H1 (cell line): ENCODE measurements at regions of chr12 and their contacts with region 1.

Region 1: GRCh38 chr12:53200458-53201176 is 6.4 kb downstream of the ITGB7 start:
- DNase-seq: no peak
- H3K4me3 ChIP-seq: no peak overlapping the region
- H3K27ac ChIP-seq: no peak overlapping the region
- H3K4me1 ChIP-seq: no peaks in the 10 kb centered on the region; a peak in 1 of 7 replicates
- H3K27me3 ChIP-seq: peaks cover under 1 to 27% (median 16%) of the 10 kb centered on the region in 4 experiments
- CTCF ChIP-seq: no peak
- EP300 ChIP-seq: no peak
- POLR2A ChIP-seq: no peak
- RAD21 ChIP-seq: no peak

Region 2: GRCh38 chr12:53129170-53129569 is 71.4 kb before region 1 on chr12:
- CTCF ChIA-PET with region 1: interaction called, 10 read pairs
- POLR2A ChIA-PET with region 1: no interaction called
- DNase-seq: no peak
- H3K4me3 ChIP-seq: no peak overlapping the region
- H3K27ac ChIP-seq: no peak overlapping the region
- H3K4me1 ChIP-seq: no peaks in the 10 kb centered on the region
- H3K27me3 ChIP-seq: no peaks in the 10 kb centered on the region
- CTCF ChIP-seq: no peak
- EP300 ChIP-seq: no peak
- POLR2A ChIP-seq: no peak
- RAD21 ChIP-seq: no peak

Region 3: GRCh38 chr12:53190108-53190729 is 10.4 kb before region 1 on chr12:
- CTCF ChIA-PET with region 1: interaction called, 198 read pairs
- POLR2A ChIA-PET with region 1: interaction called, 10 read pairs
- DNase-seq: peak in 1 of 2 experiments; percentile 81
- H3K4me3 ChIP-seq: no peak overlapping the region
- H3K27ac ChIP-seq: no peak overlapping the region
- H3K4me1 ChIP-seq: peaks cover 0 to 6% (median 3%) of the 10 kb centered on the region in 4 experiments; a peak in 4 of 7 replicates
- H3K27me3 ChIP-seq: peaks cover 0 to 8% (median 3%) of the 10 kb centered on the region in 4 experiments; a peak in 4 of 7 replicates
- CTCF ChIP-seq: peak; percentile 86 to 97 (median 89)
- EP300 ChIP-seq: no peak
- POLR2A ChIP-seq: no peak
- RAD21 ChIP-seq: peak; percentile 63 to 75

Region 4: DNA sequence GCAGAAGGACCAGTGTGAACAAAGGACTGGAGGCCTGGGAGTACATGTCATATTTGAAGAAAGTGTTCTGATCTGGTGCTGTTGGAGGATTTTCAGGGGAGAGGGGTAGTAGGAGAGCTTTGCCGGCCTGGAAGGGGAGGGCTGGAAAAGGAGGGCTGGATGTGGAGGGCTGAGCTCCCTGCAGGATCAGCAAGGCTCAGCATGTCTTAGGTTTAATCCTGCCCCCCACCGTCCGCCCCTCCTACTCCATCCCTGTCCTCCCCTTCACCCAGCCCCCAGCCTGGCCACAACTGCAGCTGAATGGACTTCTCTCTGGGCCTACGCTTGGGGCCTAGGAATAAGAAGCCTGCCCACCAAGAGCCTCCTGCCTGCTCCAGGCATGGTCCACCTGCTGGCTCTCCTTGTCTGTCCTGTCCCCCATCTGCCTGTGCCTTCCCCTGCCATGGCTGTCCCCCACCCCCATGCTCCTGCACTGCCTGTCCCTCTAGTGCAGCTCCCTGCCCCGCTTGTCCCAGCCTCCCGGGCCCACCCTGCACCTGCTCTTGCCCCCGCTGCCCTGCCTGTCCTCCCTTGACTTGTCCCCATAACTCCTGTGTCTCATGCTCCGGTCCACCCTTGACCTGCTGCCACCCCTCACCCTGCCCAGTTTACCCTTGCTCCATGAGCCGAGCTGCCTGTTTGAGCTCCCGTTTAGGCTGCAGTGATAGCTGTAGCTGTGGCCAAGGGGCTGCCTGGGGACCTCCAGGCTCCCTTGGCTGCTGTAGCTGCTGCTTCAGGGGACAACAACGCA is 41.2 kb after region 1 on chr12:
- CTCF ChIA-PET with region 1: interaction called, 535 read pairs
- POLR2A ChIA-PET with region 1: no interaction called
- DNase-seq: no peak
- H3K4me3 ChIP-seq: no peak overlapping the region
- H3K27ac ChIP-seq: no peak overlapping the region
- H3K4me1 ChIP-seq: peaks cover 0 to 13% (median 8%) of the 10 kb centered on the region in 4 experiments; a peak in 6 of 7 replicates
- H3K27me3 ChIP-seq: no peaks in the 10 kb centered on the region; a peak in 1 of 7 replicates
- CTCF ChIP-seq: no peak
- EP300 ChIP-seq: no peak
- POLR2A ChIP-seq: no peak
- RAD21 ChIP-seq: no peak

Region 5: GRCh38 chr12:53287741-53288216 is 87.2 kb after region 1 on chr12:
- CTCF ChIA-PET with region 1: interaction called, 573 read pairs
- POLR2A ChIA-PET with region 1: interaction called, 3 read pairs
- DNase-seq: peak in 1 of 2 experiments; percentile 81
- H3K4me3 ChIP-seq: no peak overlapping the region
- H3K27ac ChIP-seq: no peak overlapping the region
- H3K4me1 ChIP-seq: no peaks in the 10 kb centered on the region
- H3K27me3 ChIP-seq: no peaks in the 10 kb centered on the region
- CTCF ChIP-seq: peak; percentile 80 to 86 (median 85)
- EP300 ChIP-seq: no peak
- POLR2A ChIP-seq: no peak
- RAD21 ChIP-seq: peak; percentile 74 to 81

Region 6: DNA sequence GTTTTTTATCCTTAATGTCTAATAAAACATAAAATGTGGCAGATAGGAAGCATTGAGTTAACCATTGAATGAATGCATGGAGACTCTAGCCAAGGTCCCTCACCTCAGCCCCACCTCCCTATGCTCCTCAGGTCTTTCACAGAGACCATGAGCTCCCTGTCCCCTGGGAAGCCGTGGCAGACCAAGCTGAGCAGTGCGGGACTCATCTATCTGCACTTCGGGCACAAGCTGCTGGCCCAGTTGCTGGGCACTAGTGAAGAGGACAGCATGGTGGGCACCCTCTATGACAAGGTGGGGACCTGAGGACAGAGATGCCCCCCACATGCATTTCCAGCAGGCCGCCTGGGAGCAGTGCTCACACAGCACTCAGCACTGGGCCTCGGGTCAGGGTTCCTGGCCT is 102.3 kb after region 1 on chr12:
- CTCF ChIA-PET with region 1: interaction called, 573 read pairs
- POLR2A ChIA-PET with region 1: interaction called, 4 read pairs
- DNase-seq: no peak
- H3K4me3 ChIP-seq: no peak overlapping the region
- H3K27ac ChIP-seq: no peak overlapping the region
- H3K4me1 ChIP-seq: peaks cover 0 to 5% (median under 1%) of the 10 kb centered on the region in 4 experiments; a peak in 3 of 7 replicates
- H3K27me3 ChIP-seq: no peaks in the 10 kb centered on the region
- CTCF ChIP-seq: no peak
- EP300 ChIP-seq: no peak
- POLR2A ChIP-seq: no peak
- RAD21 ChIP-seq: no peak

Region 7: DNA sequence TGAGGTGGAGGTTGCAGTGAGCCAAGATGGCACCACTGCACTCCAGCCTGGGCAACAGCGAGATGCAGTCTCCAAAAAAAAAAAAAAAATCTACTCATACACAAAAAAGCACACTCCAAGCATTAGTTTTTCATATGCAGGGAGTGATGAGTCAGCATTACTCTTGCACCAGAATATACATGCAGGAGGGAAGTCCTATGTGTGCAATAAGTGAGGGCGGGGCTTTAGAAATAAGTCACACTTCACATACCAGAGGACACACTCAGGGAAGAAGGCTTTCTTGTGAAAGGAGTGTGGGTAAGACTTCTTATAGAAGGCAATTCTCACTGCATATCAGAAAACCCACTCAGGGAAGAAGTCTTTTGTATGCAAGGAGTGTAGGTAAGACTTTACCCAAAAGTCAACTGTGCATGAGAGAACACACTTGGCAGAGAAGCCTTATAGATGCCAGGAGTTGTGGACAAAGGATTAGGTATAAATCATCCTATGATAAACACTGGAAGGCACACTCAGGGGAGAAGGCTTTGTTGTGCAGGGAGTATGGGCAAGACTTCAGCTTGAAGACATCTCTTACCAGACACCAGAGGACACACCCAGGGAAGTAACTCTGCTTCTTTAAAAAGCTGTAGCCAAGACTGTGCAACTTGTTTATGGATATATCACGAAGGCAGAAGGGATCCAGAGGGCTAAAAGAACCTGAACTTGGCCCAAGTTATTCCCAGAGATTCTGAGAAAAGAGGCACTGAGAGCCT is 375.1 kb after region 1 on chr12:
- CTCF ChIA-PET with region 1: no interaction called
- POLR2A ChIA-PET with region 1: no interaction called
- DNase-seq: no peak
- H3K4me3 ChIP-seq: no peak overlapping the region
- H3K27ac ChIP-seq: no peak overlapping the region
- H3K4me1 ChIP-seq: no peaks in the 10 kb centered on the region
- H3K27me3 ChIP-seq: no peaks in the 10 kb centered on the region
- CTCF ChIP-seq: no peak
- EP300 ChIP-seq: no peak
- POLR2A ChIP-seq: no peak
- RAD21 ChIP-seq: no peak